Calu3 (cell line): ENCODE measurements at regions of chr1 and their contacts with region 1.

Region 1: DNA sequence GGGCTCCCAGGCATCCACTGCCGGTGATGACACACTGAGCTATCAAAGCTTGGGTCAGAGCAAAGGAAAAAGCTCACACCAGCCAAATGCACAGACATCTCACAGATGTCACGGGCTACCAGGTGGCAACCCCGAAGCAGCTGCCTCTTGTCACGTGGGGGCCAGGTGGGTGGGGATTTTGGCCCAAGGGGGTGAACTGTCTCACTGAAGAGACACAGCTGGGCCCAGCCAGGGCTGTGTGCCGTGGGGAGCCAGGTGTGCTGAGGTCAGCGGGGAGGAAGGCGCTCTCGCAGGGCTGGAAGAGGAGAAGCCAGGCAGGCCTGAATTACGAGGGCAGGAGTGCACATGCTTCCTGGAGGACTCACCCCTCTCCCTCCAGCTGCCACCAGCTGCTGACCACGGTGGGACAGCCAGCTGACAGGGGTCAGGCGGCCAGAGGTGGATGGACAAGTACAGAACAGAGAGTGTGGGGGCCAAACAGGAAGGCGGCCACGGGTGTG is 32.4 kb downstream of the KCNN3 start:
- DNase-seq: no peak
- H3K4me3 Mint-ChIP-seq: no peak overlapping the region
- H3K27ac Mint-ChIP-seq: no peak overlapping the region
- H3K4me1 Mint-ChIP-seq: no peaks in the 10 kb centered on the region
- H3K27me3 Mint-ChIP-seq: peaks cover 93% of the 10 kb centered on the region
- CTCF ChIP-seq: no peak

Region 2: GRCh38 chr1:154784924-154785531 is 52.7 kb before region 1 on chr1:
- CTCF ChIA-PET with region 1: interaction called, 11 read pairs
- intact Hi-C with region 1: no loop called
- DNase-seq: no peak
- H3K4me3 Mint-ChIP-seq: no peak overlapping the region
- H3K27ac Mint-ChIP-seq: no peak overlapping the region
- H3K4me1 Mint-ChIP-seq: no peaks in the 10 kb centered on the region
- H3K27me3 Mint-ChIP-seq: peaks cover 69% of the 10 kb centered on the region
- CTCF ChIP-seq: no peak